Aorta (tissue), 5 donors: ENCODE measurements at regions of chr2 and their contacts with region 1.

Region 1: GRCh38 chr2:26122630-26123029 is 50.3 kb upstream of the GAREM2 start:
- DNase-seq: no peak
- ATAC-seq: no peak
- H3K4me3 ChIP-seq: no peak overlapping the region
- H3K27ac ChIP-seq: no peak overlapping the region
- H3K4me1 ChIP-seq: no peaks in the 10 kb centered on the region
- H3K27me3 ChIP-seq: no peaks in the 10 kb centered on the region

Region 2: DNA sequence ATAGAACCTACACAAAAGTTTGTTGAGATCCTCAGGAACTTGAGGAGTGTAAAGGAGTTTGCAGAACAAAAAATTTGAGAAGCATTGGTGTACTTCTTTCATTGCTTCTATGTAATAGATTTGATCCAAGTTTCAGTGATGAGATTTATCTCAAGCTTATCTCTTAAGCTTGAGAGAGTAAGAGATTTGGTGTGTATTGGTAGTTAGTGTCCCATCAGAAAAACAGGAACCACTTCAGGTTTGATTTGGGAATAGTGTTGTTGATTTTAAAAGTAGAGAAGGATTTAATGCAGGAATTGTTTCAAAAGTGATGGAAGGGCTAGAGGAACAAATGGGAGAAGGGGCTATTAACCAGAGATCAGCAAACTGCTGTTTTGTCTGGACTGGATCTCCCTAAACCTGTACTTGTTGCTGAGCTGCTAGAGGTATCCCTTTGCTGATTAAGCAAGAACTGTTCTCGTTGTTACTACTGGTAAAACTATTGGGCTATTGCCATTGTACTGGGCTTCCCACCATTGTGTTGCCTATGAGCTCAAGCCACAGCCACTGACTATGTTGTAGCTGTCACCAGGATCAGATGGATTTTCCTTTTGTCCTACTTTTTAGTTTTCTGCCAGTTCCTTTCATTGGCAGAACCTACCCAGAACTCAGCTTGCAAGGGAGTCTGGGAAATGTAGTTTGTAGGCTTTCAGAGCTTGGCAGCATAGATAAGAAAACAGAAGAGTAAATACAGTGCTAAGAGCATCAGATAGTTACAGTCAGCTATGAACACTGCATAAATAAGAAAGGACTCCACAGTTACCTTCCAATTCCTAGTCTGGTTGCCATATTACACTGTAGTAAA is 49.5 kb before region 1 on chr2:
- intact Hi-C with region 1: loop called in 1 of 2 experiments (anchors 10 kb)
- DNase-seq: no peak
- ATAC-seq: no peak
- H3K4me3 ChIP-seq: no peak overlapping the region
- H3K27ac ChIP-seq: no peak overlapping the region
- H3K4me1 ChIP-seq: peaks cover 3 to 10% of the 10 kb centered on the region in 2 donors
- H3K27me3 ChIP-seq: no peaks in the 10 kb centered on the region

Region 3: DNA sequence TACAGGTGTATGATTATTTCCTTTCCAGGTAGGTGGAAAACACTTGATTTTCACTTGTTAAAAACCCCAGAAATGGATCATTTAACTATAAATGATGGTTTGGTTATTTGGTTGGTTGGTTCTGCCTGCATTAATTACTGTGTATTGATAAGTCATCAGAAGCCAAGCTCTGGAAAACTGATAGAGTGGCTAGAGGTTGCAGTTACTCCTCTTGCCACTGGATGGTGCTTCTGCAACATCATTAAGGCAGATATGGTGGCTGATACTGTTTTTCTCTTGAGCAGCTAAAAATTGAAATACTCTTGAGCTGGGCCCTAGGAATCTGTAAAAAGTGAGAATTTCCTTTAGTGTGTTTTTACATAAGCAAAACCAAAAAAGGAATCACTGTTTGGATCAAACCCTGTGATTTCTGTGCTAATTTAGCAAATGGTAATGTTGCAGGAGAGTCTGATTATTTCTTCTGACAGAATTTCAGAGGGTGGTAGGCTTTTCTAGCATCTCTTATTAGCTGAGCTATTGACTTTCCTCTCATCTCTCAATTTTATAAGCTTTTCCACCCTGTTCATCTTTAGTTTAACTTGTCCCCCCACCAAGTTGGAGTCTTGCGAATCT is 34.5 kb before region 1 on chr2:
- intact Hi-C with region 1: loop called in 1 of 2 experiments (anchors 2 kb)
- DNase-seq: no peak
- ATAC-seq: no peak
- H3K4me3 ChIP-seq: no peak overlapping the region
- H3K27ac ChIP-seq: no peak overlapping the region
- H3K4me1 ChIP-seq: peaks cover 0 to 2% of the 10 kb centered on the region in 2 donors
- H3K27me3 ChIP-seq: no peaks in the 10 kb centered on the region